ENCODE measurements at regions of chr19 and their contacts with region 1.

Region 1: GRCh38 chr19:18831524-18832305 is at the start of gene UPF1:
- DNase-seq: peak; percentile 96
- H3K4me3 Mint-ChIP-seq: peak within 1 kb of the TSS; percentile 96
- H3K27ac Mint-ChIP-seq: peak within 1 kb of the TSS; percentile 95
- H3K4me1 Mint-ChIP-seq: peaks cover 35% of the 10 kb centered on the region
- H3K27me3 Mint-ChIP-seq: peaks cover 14% of the 10 kb centered on the region
- total RNA-seq, gene UPF1: 102 and 113 TPM in 2 replicates

Region 2: DNA sequence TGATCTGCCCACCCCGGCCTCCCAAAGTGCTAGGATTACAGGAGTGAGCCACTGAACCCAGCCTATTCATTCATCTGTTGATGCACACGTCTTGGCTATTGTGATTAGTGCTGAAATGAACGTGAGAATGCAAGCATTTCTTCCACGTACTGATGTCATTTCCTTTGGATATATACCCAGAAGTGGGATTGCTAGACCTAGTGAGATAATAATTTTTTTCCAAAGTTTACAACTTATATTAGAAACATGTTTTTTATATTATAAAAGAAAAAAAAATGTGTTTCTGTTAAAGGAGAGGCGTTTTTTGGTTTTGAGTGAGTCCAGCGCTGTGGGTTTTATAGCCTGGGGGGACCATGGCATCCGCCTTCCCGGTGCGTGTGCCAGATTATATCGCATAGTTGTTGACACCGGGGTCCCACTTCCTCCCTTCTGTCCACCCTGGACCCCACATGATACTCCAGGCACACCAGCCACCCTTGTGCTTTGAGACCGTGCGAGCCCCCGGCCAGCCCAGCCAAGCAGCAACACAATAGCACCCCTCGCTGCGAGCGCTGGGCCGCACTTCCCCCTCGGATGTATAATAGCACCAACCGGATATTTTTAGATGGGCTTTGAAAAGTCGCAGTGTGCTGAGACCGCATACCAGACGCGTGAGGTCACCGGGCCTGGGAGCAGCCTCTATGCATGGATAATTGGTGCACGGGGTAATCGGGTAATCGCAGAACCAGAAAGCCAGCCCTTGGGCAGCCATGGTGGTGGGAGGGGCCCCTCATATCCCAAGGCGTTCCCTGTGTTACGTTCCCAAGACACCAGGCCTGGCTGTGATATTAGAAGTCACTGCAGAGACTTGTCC is 1696.5 kb before region 1 on chr19:
- intact Hi-C with region 1: no loop called
- DNase-seq: no peak
- H3K4me3 Mint-ChIP-seq: no peak overlapping the region
- H3K27ac Mint-ChIP-seq: no peak overlapping the region
- H3K4me1 Mint-ChIP-seq: peaks cover 17% of the 10 kb centered on the region
- H3K27me3 Mint-ChIP-seq: no peaks in the 10 kb centered on the region

Region 3: DNA sequence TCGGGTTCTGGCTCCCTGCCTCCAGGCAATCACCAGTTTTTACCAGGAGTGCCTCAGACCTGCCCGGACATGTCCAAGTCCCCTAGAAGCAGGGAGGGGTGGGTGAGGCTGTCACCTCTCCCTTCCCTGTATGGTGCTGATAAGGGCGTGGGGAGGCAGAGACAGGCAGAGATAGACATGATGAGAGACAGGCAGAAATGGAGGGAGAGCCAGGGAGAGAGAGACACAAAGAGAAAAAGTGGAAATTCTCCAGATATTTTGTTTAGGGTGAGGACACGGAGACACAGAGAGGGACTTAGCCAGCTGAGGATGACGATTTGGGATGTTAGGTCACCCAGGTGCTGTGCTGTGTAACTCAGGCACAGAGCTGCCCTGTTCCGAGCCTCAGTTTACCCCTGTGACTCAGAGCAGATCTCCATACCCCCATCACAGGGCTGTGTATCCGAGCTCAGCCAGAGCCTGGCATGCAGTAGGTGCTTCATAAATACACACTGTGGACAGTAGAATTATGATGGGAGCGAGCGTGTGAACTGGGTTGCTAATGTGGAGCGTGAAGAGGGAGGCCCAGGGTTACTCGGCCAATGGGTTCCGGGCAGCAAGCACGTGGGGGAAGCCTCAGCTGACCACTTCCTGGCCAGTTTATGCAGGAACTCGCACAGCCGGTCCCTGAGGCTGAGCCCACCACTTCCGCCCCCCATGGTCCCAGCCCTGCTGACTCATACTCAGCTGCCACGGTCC is 457.7 kb before region 1 on chr19:
- intact Hi-C with region 1: no loop called
- DNase-seq: peak; percentile 37
- H3K4me3 Mint-ChIP-seq: peak overlapping the region; percentile 34
- H3K27ac Mint-ChIP-seq: peak overlapping the region; percentile 75
- H3K4me1 Mint-ChIP-seq: peaks cover 12% of the 10 kb centered on the region
- H3K27me3 Mint-ChIP-seq: no peaks in the 10 kb centered on the region

Region 4: GRCh38 chr19:18571564-18572300 is 260.0 kb before region 1 on chr19 and contains the start of gene UBA52:
- intact Hi-C with region 1: loop called (anchors 5 kb)
- DNase-seq: peak; percentile 99
- H3K4me3 Mint-ChIP-seq: peak within 1 kb of the TSS; percentile 91
- H3K27ac Mint-ChIP-seq: peak within 1 kb of the TSS; percentile 98
- H3K4me1 Mint-ChIP-seq: peaks cover 27% of the 10 kb centered on the region
- H3K27me3 Mint-ChIP-seq: no peaks in the 10 kb centered on the region
- total RNA-seq, gene UBA52: 1,472 and 1,500 TPM in 2 replicates

Region 5: GRCh38 chr19:18785179-18786128 is 46.3 kb before region 1 on chr19:
- intact Hi-C with region 1: loop called (anchors 5 kb)
- DNase-seq: peak; percentile 41
- H3K4me3 Mint-ChIP-seq: no peak overlapping the region
- H3K27ac Mint-ChIP-seq: no peak overlapping the region
- H3K4me1 Mint-ChIP-seq: peaks cover 9% of the 10 kb centered on the region
- H3K27me3 Mint-ChIP-seq: peaks cover 34% of the 10 kb centered on the region

Region 6: GRCh38 chr19:18940769-18941407 is 109.2 kb after region 1 on chr19 and contains the start of gene HOMER3:
- intact Hi-C with region 1: no loop called
- DNase-seq: peak; percentile 68
- H3K4me3 Mint-ChIP-seq: peak within 1 kb of the TSS; percentile 22
- H3K27ac Mint-ChIP-seq: no peak within 1 kb of the TSS
- H3K4me1 Mint-ChIP-seq: no peaks in the 10 kb centered on the region
- H3K27me3 Mint-ChIP-seq: peaks cover 43% of the 10 kb centered on the region
- total RNA-seq, gene HOMER3: 0.29 and 0.75 TPM in 2 replicates

Region 7: DNA sequence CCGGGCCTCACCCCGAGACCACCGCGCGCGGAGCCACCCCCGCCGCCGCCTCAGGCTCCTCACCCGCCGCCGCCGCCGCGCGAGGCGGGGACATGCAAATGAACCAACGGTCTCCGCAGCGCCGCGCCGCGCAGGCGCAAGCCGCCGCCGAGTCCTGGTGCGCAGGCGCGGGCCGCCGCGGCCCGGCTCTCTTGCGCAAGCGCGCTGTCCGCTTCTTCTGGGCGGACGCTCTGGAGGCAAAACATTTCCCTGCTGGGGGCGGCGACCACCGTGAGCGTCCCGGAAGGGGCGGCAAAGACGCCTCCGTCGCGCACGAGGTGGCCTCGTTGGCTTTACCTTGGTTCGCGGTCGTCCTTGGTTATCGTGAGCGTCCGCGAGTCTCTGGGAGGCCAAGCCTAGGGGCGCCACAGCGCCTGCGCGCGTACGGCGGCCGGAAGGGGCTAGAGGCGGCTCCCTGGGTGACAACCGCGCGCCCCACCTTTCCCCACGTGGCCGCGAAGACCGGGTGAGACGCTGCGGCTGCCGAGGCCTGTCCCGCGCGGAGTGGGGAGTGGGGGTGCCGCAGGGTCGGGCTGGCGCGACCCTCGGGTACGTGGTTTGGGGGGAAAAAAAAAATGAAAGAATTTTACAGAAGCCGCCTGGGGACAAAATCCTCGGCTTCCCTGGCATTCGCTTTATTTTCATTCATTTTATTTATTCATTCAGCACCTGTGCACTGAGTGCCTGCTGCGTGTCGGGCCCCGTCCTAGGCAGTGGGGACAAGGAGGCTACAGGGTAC is 201.9 kb after region 1 on chr19 and contains the starts of genes ARMC6 and SUGP2:
- intact Hi-C with region 1: loop called (anchors 5 kb)
- DNase-seq: peak; percentile 89
- H3K4me3 Mint-ChIP-seq: peak within 1 kb of the TSS; percentile 98
- H3K27ac Mint-ChIP-seq: peak within 1 kb of the TSS; percentile 98
- H3K4me1 Mint-ChIP-seq: peaks cover 25% of the 10 kb centered on the region
- H3K27me3 Mint-ChIP-seq: no peaks in the 10 kb centered on the region
- total RNA-seq, gene ARMC6: 54.9 and 56.5 TPM in 2 replicates
- total RNA-seq, gene SUGP2: 114 and 128 TPM in 2 replicates